IMR-90 (cell line): ENCODE measurements at regions of chr19 and their contacts with region 1.

Region 1: DNA sequence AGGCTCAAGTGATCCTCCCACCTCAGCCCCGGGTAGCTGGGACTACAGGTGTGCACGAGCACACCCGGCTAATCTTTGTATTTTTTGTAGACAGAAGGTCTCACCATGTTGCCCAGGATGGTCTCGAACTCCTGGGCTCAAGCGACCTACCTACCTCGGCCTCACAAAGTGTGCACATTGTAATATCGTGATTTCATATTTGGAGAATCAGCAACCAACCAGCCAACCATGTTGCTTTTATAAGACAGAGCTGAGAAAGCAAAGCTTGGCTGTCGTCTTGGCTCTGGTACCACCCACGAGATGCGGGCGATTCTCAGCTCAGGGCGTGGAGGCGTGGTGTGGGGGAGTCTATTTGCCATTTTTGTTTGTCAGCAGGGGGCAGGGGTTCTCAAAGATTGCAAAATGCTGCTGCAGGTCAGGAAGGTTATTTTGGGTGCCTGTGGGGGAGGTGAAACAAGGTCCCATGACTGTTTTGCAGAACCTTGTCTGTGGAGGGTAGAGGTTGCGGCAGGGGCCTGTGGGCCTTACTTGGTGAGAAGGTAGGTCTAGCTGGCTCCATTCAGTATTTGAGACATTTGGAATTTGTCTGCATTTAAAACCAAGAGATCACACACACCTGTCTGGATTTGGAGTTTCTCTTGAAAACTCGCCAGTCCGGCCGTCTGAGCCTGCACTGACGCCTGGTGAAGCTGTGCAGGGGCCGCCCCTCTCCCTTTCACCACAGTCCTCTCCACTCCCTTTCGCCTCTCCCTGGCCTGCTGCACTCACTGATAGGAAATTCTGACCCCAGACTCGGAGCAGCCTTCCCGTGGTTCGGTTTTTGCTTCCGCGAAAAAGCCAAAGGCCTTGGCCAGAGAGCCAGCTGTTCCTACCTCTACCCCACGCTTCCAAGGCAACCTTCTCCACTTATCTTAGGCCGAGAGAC is 15.4 kb downstream of the TNFAIP8L1 start:
- DNase-seq: no peak
- ATAC-seq: no peak
- H3K4me3 ChIP-seq: no peak overlapping the region
- H3K27ac ChIP-seq: no peak overlapping the region
- H3K4me1 ChIP-seq: no peaks in the 10 kb centered on the region
- H3K27me3 ChIP-seq: no peaks in the 10 kb centered on the region
- CTCF ChIP-seq: no peak
- POLR2A ChIP-seq: no peak
- RAD21 ChIP-seq: no peak

Region 2: DNA sequence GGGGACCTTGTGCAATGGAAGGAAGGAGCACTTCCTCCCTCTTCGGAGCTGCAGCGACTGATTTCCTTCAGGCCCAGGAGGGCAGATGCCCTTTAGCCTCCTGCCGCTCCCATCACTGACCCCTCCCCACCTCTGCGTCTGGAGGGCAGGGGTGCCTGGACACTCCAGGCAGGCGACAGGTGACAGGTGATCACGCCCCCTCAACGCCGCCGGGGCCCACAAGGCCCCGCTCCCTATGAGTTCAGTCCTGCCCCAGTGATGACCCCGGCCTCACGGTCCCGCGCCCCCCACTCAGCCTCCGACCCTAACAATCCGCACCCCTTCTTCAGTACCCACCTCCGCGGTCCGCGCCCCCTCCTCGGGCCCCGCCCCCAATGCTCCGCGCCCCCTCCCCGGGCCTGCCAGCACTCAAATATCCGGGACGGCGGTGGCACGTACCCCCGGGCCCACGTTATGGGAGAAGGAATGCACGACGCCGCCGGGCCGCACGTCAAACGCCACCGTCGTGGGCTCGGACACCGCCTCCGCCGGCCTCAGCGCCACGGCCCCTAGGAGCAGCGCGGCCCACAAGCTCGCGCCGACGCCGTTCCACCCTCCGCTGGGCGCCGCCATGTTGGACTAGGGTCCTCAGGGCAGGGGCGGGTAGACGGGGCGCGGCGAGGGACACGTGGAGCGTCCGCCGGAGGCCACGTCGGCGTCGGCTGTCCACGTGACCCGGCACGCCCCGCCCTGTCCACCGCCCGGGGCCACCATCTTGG is 15.2 kb after region 1 on chr19 and contains the start of gene MYDGF:
- CTCF ChIA-PET with region 1: interaction called, 3 read pairs
- POLR2A ChIA-PET with region 1: no interaction called
- dilution Hi-C with region 1: no loop called
- in situ Hi-C with region 1: no loop called
- intact Hi-C with region 1: loop called (anchors 2 kb)
- DNase-seq: peak; percentile 86
- ATAC-seq: peak; percentile 98
- H3K4me3 ChIP-seq: peak within 1 kb of the TSS; percentile 98
- H3K27ac ChIP-seq: peak within 1 kb of the TSS; percentile 91
- H3K4me1 ChIP-seq: peaks cover 4% of the 10 kb centered on the region; the same call in 1 of the 2 replicates
- H3K27me3 ChIP-seq: no peaks in the 10 kb centered on the region
- CTCF ChIP-seq: no peak
- POLR2A ChIP-seq: peak; percentile 91
- RAD21 ChIP-seq: no peak
- total RNA-seq, gene MYDGF: 160 and 203 TPM in 2 replicates